SK-N-SH (cell line): ENCODE measurements at regions of chr1 and their contacts with region 1.

Region 1: GRCh38 chr1:17606826-17607440 is 67.4 kb downstream of the ARHGEF10L start:
- DNase-seq: peak; percentile 88
- H3K4me3 ChIP-seq: no peak overlapping the region; a peak in 1 of 4 replicates
- H3K27ac ChIP-seq: no peak overlapping the region
- H3K4me1 ChIP-seq: peaks cover 0 to 41% of the 10 kb centered on the region in 2 experiments; a peak in 1 of 4 replicates
- H3K27me3 ChIP-seq: no peaks in the 10 kb centered on the region
- CTCF ChIP-seq: peak; percentile 98
- EP300 ChIP-seq: no peak
- RAD21 ChIP-seq: peak; percentile 96

Region 2: GRCh38 chr1:17488995-17489767 is 117.8 kb before region 1 on chr1:
- CTCF ChIA-PET with region 1: interaction called, 707 read pairs
- POLR2A ChIA-PET with region 1: interaction called, 3 read pairs
- DNase-seq: peak; percentile 71
- H3K4me3 ChIP-seq: no peak overlapping the region
- H3K27ac ChIP-seq: peak overlapping the region in 1 of 2 experiments; percentile 54; a peak in 2 of 4 replicates
- H3K4me1 ChIP-seq: peaks cover 6% of the 10 kb centered on the region in 2 experiments; a peak in 2 of 4 replicates
- H3K27me3 ChIP-seq: no peaks in the 10 kb centered on the region
- CTCF ChIP-seq: no peak
- EP300 ChIP-seq: peak in 1 of 2 experiments; percentile 73; a peak in 2 of 4 replicates
- RAD21 ChIP-seq: no peak

Region 3: GRCh38 chr1:17531343-17531681 is 75.6 kb before region 1 on chr1:
- CTCF ChIA-PET with region 1: interaction called, 12 read pairs
- POLR2A ChIA-PET with region 1: no interaction called
- DNase-seq: no peak
- H3K4me3 ChIP-seq: no peak overlapping the region
- H3K27ac ChIP-seq: peak overlapping the region in 1 of 2 experiments; percentile 56; a peak in 1 of 4 replicates
- H3K4me1 ChIP-seq: peaks cover 7 to 9% of the 10 kb centered on the region in 2 experiments; a peak in 2 of 4 replicates
- H3K27me3 ChIP-seq: no peaks in the 10 kb centered on the region
- CTCF ChIP-seq: no peak
- EP300 ChIP-seq: no peak
- RAD21 ChIP-seq: no peak

Region 4: GRCh38 chr1:17569200-17570161 is 37.5 kb before region 1 on chr1:
- CTCF ChIA-PET with region 1: interaction called, 42 read pairs
- POLR2A ChIA-PET with region 1: no interaction called
- DNase-seq: peak; percentile 60
- H3K4me3 ChIP-seq: no peak overlapping the region
- H3K27ac ChIP-seq: peak overlapping the region; percentile 81 to 99
- H3K4me1 ChIP-seq: peaks cover 12 to 46% of the 10 kb centered on the region in 2 experiments; a peak in 3 of 4 replicates
- H3K27me3 ChIP-seq: no peaks in the 10 kb centered on the region
- CTCF ChIP-seq: no peak
- EP300 ChIP-seq: no peak
- RAD21 ChIP-seq: no peak

Region 5: GRCh38 chr1:17596651-17597509 is 10.1 kb before region 1 on chr1:
- CTCF ChIA-PET with region 1: interaction called, 13 read pairs
- POLR2A ChIA-PET with region 1: no interaction called
- DNase-seq: peak; percentile 66
- H3K4me3 ChIP-seq: no peak overlapping the region
- H3K27ac ChIP-seq: peak overlapping the region in 1 of 2 experiments; percentile 92; a peak in 2 of 4 replicates
- H3K4me1 ChIP-seq: peaks cover 0 to 75% of the 10 kb centered on the region in 2 experiments; a peak in 2 of 4 replicates
- H3K27me3 ChIP-seq: no peaks in the 10 kb centered on the region
- CTCF ChIP-seq: no peak
- EP300 ChIP-seq: peak in 1 of 2 experiments; percentile 76; a peak in 1 of 4 replicates
- RAD21 ChIP-seq: peak; percentile 29; the same call in 1 of the 2 replicates

Region 6: GRCh38 chr1:17643861-17644703 is 37.1 kb after region 1 on chr1:
- CTCF ChIA-PET with region 1: interaction called, 12 read pairs
- POLR2A ChIA-PET with region 1: no interaction called
- DNase-seq: no peak
- H3K4me3 ChIP-seq: no peak overlapping the region
- H3K27ac ChIP-seq: no peak overlapping the region; a peak in 1 of 4 replicates
- H3K4me1 ChIP-seq: peaks cover 0 to 36% of the 10 kb centered on the region in 2 experiments; a peak in 2 of 4 replicates
- H3K27me3 ChIP-seq: no peaks in the 10 kb centered on the region
- CTCF ChIP-seq: no peak
- EP300 ChIP-seq: no peak
- RAD21 ChIP-seq: no peak